Activated CD8-positive, alpha-beta memory T cell treated with anti-CD3 and anti-CD28 coated beads, Interleukin-2, amount 10 ng/mL, durations not matched to agents 7 days and 5 days (primary cell): ENCODE measurements at regions of chr7 and their contacts with region 1.

Region 1: GRCh38 chr7:101138213-101138870 is 11.4 kb downstream of the SERPINE1 start:
- DNase-seq: peak; percentile 91
- ATAC-seq: peak; percentile 97
- H3K4me3 Mint-ChIP-seq: no peak overlapping the region
- H3K27ac Mint-ChIP-seq: peak overlapping the region; percentile 29
- H3K4me1 Mint-ChIP-seq: peaks cover 44% of the 10 kb centered on the region
- H3K27me3 Mint-ChIP-seq: peaks cover 45% of the 10 kb centered on the region

Region 2: GRCh38 chr7:100933735-100934134 is 204.6 kb before region 1 on chr7:
- CTCF ChIA-PET with region 1: no interaction called
- DNase-seq: no peak
- ATAC-seq: no peak
- H3K4me3 Mint-ChIP-seq: no peak overlapping the region
- H3K27ac Mint-ChIP-seq: no peak overlapping the region
- H3K4me1 Mint-ChIP-seq: no peaks in the 10 kb centered on the region
- H3K27me3 Mint-ChIP-seq: peaks cover 9% of the 10 kb centered on the region

Region 3: DNA sequence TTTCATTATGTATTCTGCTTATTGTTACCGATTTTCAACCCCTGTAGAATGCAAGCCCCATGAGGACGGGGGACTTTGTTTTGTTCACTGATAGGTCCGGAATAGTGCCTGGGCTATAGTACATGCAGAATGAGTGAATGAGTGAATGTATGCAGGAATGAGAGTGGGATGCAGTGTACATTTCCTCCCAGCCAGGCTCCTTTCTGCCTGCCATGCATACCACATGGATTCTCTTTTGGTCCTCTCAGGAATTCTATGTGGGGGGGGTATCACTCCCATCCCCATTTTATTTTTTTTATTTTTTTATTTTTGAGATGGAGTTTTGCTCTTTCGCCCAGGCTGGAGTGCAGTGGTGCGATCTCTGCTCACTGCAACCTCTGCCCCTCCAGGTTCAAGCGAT is 36.3 kb before region 1 on chr7:
- CTCF ChIA-PET with region 1: no interaction called
- DNase-seq: no peak
- ATAC-seq: no peak
- H3K4me3 Mint-ChIP-seq: no peak overlapping the region
- H3K27ac Mint-ChIP-seq: no peak overlapping the region
- H3K4me1 Mint-ChIP-seq: peaks cover 13% of the 10 kb centered on the region
- H3K27me3 Mint-ChIP-seq: peaks cover 35% of the 10 kb centered on the region

Region 4: GRCh38 chr7:101153969-101154692 is 15.8 kb after region 1 on chr7 and contains the start of gene AP1S1:
- CTCF ChIA-PET with region 1: interaction called, 90 read pairs
- DNase-seq: peak; percentile 96
- ATAC-seq: peak; percentile 93
- H3K4me3 Mint-ChIP-seq: peak within 1 kb of the TSS; percentile 73
- H3K27ac Mint-ChIP-seq: peak within 1 kb of the TSS; percentile 58
- H3K4me1 Mint-ChIP-seq: peaks cover 9% of the 10 kb centered on the region
- H3K27me3 Mint-ChIP-seq: peaks cover 21% of the 10 kb centered on the region
- total RNA-seq, gene AP1S1: 49.9 to 51.7 TPM

Region 5: DNA sequence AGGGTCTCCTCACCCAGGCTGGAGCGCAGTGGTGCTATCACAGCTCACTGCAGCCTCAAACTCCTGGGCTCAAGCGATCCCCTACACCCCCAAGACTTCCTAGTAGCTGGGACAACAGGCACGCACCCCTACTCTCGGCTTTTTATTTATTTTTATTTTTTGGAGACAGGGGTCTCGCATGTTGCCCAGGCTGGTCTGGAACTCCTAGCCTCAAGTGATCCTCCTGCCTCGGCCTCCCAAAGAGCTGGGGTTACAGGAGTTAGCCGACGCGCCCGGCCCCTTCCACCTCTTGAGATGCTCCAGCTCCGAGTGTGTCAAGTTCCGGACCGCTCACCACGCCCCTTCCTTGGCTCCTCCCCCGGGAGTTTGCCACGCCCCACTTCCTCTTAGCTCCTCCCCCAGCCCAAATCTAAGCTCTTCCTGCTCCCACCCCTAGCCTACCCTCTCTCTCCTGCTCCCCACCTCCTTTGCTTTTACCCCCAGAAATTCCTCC is 35.5 kb after region 1 on chr7:
- CTCF ChIA-PET with region 1: interaction called, 37 read pairs
- DNase-seq: peak; percentile 83
- ATAC-seq: peak; percentile 87
- H3K4me3 Mint-ChIP-seq: peak overlapping the region; percentile 17
- H3K27ac Mint-ChIP-seq: no peak overlapping the region
- H3K4me1 Mint-ChIP-seq: peaks cover 37% of the 10 kb centered on the region
- H3K27me3 Mint-ChIP-seq: peaks cover 92% of the 10 kb centered on the region

Region 6: GRCh38 chr7:101195884-101196283 is 57.5 kb after region 1 on chr7:
- CTCF ChIA-PET with region 1: interaction called, 111 read pairs
- DNase-seq: no peak
- ATAC-seq: no peak
- H3K4me3 Mint-ChIP-seq: no peak overlapping the region
- H3K27ac Mint-ChIP-seq: no peak overlapping the region
- H3K4me1 Mint-ChIP-seq: peaks cover 4% of the 10 kb centered on the region
- H3K27me3 Mint-ChIP-seq: peaks cover 13% of the 10 kb centered on the region

Region 7: GRCh38 chr7:101244375-101245146 is 106.2 kb after region 1 on chr7 and contains the start of gene FIS1:
- CTCF ChIA-PET with region 1: interaction called, 37 read pairs
- DNase-seq: peak; percentile 95
- ATAC-seq: peak; percentile 97
- H3K4me3 Mint-ChIP-seq: peak within 1 kb of the TSS; percentile 91
- H3K27ac Mint-ChIP-seq: peak within 1 kb of the TSS; percentile 94
- H3K4me1 Mint-ChIP-seq: peaks cover 31% of the 10 kb centered on the region
- H3K27me3 Mint-ChIP-seq: no peaks in the 10 kb centered on the region
- total RNA-seq, gene FIS1: 86.7 to 117 TPM